A549 (cell line): ENCODE measurements at regions of chr5 and their contacts with region 1.

Region 1: DNA sequence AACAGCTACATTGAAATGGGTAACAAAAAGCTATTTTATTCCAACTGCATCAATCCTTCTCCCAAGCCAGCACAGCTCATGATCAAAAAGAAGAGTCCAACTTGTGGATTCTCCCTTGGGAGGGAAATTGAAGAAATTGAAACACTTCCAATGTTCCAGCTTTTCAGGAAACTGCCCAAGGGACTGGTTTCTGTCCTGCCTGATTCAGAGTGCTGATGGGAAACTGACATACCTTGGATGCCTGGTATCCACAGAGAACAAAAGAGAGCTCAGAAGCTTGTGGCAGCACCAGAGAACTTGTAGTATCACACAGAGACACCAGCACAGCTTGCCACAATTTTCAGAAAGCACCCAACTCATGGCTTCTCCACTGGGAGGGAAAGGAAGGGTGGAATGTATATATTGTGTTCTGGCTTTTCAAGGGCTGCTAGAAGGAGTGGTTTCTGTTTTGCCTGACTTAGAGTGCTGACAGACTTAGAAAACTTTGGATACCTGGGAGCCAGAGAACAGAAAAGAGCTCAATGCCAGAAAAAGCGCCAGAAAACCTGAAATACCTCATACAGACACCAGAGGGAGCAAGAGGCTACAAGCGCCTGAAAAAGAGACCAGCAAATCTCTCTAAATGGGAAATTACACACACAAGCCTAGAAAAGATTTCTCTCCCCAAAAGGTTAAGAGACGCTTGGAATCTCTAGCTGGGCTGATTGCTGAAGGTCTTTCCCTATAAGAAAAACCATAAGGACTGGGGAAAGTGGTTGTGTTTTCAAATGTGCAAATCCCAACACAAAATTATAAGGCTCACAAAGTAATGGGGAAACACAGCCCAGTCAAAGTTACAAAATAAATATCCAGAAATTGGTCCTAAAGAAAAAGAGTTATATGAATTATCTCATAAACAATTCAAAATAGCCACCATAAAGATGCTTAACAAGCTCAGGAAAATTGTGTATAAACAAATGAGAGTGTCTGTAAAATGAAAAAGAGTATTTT is 178.8 kb downstream of the SPOCK1 start:
- DNase-seq: peak; percentile 54 to 64
- ATAC-seq: peak; percentile 34 to 72; a peak in 3 of 6 replicates
- H3K4me3 ChIP-seq: no peak overlapping the region
- H3K27ac ChIP-seq: no peak overlapping the region
- H3K4me1 ChIP-seq: peaks cover 7% of the 10 kb centered on the region; the same call in 2 of the 3 replicates
- CTCF ChIP-seq: peak; percentile 85
- EP300 ChIP-seq: no peak
- POLR2A ChIP-seq: no peak
- RAD21 ChIP-seq: peak; percentile 78 to 81

Region 2: DNA sequence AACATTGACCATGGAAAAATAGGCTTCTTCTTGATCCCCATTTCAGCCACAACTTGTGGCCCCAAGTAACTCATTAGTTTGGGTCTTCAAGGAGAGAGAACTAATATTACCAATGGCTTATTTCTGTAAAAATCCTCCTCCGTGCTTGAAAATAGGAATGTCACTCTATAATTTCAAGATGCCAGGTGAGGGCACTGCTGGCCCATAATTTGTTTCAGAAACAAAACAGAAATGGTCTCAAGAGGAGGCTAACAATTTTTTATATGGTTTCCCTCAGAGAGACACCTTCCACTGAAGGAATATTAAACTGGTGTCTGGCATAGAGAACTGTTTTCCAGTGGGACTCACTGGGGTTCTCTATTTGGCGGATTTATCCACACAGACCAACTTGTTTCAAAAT is 518.0 kb before region 1 on chr5:
- CTCF ChIA-PET with region 1: interaction called, 31 read pairs
- POLR2A ChIA-PET with region 1: no interaction called
- DNase-seq: peak; percentile 5 to 24
- ATAC-seq: no peak; a peak in 1 of 6 replicates
- H3K4me3 ChIP-seq: no peak overlapping the region
- H3K27ac ChIP-seq: no peak overlapping the region
- H3K4me1 ChIP-seq: no peaks in the 10 kb centered on the region
- CTCF ChIP-seq: peak; percentile 51
- EP300 ChIP-seq: no peak
- POLR2A ChIP-seq: no peak
- RAD21 ChIP-seq: peak; percentile 62 to 71

Region 3: DNA sequence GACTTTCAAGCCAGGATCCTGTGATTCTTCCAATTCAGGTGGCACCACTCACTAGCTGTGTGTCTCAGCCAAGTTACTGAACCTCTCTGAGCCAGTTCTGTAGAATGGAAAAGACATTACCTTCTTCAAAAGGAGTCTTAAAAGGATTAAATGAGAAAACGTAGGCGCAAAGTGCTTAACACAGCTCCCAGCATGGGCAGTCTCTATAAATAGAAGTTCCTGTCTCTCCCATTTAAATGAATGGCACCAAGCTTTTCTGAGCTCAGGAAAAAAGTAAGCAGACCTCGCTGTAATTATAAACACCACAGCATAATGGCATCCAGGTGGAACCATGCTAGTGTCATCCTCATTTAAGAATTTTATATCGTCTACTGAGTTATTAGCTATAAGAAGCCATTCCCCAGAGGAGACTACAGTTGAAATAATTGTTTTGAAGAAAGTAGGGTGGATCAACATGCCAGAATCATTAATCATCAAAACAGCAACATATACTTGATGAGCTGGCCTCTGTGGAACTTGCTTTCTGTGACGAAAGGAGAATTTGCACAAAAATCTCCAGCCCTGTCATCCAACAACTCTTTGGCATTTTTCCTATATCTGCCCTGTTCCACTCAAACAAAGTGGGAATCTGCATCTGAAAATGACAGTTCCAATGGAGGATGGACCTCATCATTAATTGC is 10.2 kb before region 1 on chr5:
- CTCF ChIA-PET with region 1: interaction called, 21 read pairs
- POLR2A ChIA-PET with region 1: interaction called, 3 read pairs
- DNase-seq: peak; percentile 44 to 72
- ATAC-seq: peak; percentile 71 to 81
- H3K4me3 ChIP-seq: no peak overlapping the region
- H3K27ac ChIP-seq: peak overlapping the region in 1 of 2 experiments; percentile 70; a peak in 3 of 6 replicates
- H3K4me1 ChIP-seq: peaks cover 35% of the 10 kb centered on the region
- CTCF ChIP-seq: no peak
- EP300 ChIP-seq: no peak
- POLR2A ChIP-seq: no peak
- RAD21 ChIP-seq: no peak

Region 4: GRCh38 chr5:137344723-137345322 is 24.5 kb after region 1 on chr5:
- CTCF ChIA-PET with region 1: interaction called, 39 read pairs
- POLR2A ChIA-PET with region 1: no interaction called
- DNase-seq: peak; percentile 18 to 60
- ATAC-seq: peak in 1 of 2 experiments; percentile 73; a peak in 4 of 6 replicates
- H3K4me3 ChIP-seq: no peak overlapping the region
- H3K27ac ChIP-seq: no peak overlapping the region
- H3K4me1 ChIP-seq: no peaks in the 10 kb centered on the region
- CTCF ChIP-seq: peak; percentile 72
- EP300 ChIP-seq: no peak
- POLR2A ChIP-seq: no peak
- RAD21 ChIP-seq: peak; percentile 65 to 82

Region 5: DNA sequence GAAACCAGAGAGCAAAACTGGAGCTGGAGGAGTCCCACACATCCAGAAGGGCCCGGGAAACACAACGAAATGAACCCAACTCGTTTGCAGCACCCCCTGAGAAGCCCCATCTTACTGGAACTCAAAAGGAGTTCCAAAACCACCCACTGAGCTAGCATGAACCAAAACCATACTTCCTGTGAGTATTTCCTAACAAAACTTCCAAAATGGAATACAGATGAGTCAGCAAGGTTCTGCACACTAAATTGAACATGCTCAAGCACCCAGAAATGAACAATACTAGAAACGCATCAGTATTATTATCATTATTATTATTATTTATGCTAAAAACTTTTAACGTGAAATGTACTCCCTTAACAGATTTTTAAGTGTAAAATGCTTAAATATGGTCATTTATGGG is 186.8 kb after region 1 on chr5:
- CTCF ChIA-PET with region 1: interaction called, 21 read pairs
- POLR2A ChIA-PET with region 1: no interaction called
- DNase-seq: no peak
- ATAC-seq: no peak
- H3K4me3 ChIP-seq: no peak overlapping the region
- H3K27ac ChIP-seq: no peak overlapping the region
- H3K4me1 ChIP-seq: no peaks in the 10 kb centered on the region
- CTCF ChIP-seq: no peak
- EP300 ChIP-seq: no peak
- POLR2A ChIP-seq: no peak
- RAD21 ChIP-seq: no peak

Region 6: DNA sequence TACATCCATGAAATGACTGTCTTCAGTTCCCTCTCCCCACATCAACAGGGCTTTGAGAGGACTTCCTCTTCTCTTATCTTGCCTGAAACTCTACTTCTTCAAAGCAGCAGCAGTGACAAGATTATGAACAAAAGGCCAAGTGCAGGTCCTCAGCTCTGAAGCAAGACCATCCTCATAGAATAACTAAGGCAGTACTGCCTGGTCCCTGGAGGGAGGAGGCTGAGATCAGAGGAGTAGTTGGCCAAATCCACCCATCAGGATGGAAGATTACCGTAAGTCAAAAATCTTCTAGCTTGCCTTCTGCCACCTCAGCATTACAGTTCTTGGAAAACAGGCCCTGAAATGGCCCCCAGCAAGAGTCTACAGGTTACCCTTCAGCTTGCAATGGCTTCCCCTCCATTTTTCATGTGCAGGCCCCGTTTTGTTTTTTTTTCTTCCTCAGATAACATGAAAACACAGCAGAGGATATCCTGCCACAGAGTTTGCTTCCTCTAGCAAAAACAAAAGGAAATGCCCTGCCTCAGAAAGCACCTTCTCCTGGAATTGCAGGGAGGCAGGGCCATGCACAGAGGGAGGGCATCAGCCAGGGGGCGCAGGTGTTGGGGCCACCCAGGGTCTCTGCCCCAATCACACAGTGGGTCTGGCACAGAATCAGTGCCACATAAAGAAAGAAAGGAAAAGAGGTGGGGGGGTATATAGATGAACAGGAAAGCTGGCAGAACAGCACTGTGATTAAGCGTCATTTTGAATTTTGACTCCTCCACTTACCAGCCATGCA is 375.5 kb after region 1 on chr5:
- CTCF ChIA-PET with region 1: no interaction called
- POLR2A ChIA-PET with region 1: no interaction called
- DNase-seq: no peak
- ATAC-seq: no peak
- H3K4me3 ChIP-seq: no peak overlapping the region
- H3K27ac ChIP-seq: no peak overlapping the region
- H3K4me1 ChIP-seq: no peaks in the 10 kb centered on the region
- CTCF ChIP-seq: no peak
- EP300 ChIP-seq: no peak
- POLR2A ChIP-seq: no peak
- RAD21 ChIP-seq: no peak